ENCODE measurements at regions of chr19 and their contacts with region 1.

Region 1: GRCh38 chr19:19865739-19866481 is at the start of gene ZNF253:
- DNase-seq: peak; percentile 98
- ATAC-seq: peak; percentile 98
- H3K4me3 ChIP-seq: peak within 1 kb of the TSS; percentile 76 to 80
- H3K27ac ChIP-seq: peak within 1 kb of the TSS; percentile 43 to 50
- H3K4me1 ChIP-seq: no peaks in the 10 kb centered on the region
- H3K27me3 ChIP-seq: no peaks in the 10 kb centered on the region
- total RNA-seq, gene ZNF253: 5.4 to 12.6 TPM

Region 2: GRCh38 chr19:19776041-19777008 is 89.6 kb before region 1 on chr19:
- intact Hi-C with region 1: loop called in 1 of 2 experiments (anchors 10 kb)
- DNase-seq: peak; percentile 99
- ATAC-seq: peak; percentile 100
- H3K4me3 ChIP-seq: peak overlapping the region; percentile 22 to 65
- H3K27ac ChIP-seq: no peak overlapping the region
- H3K4me1 ChIP-seq: peaks cover 0 to 4% of the 10 kb centered on the region in 2 donors
- H3K27me3 ChIP-seq: no peaks in the 10 kb centered on the region

Region 3: GRCh38 chr19:19900729-19901444 is 35.0 kb after region 1 on chr19 and contains the start of gene ZNF93:
- intact Hi-C with region 1: loop called in 1 of 2 experiments (anchors 5 kb)
- DNase-seq: peak; percentile 94
- ATAC-seq: peak; percentile 99
- H3K4me3 ChIP-seq: peak within 1 kb of the TSS; percentile 75 to 82
- H3K27ac ChIP-seq: peak within 1 kb of the TSS in 1 of 2 donors; percentile 72
- H3K4me1 ChIP-seq: no peaks in the 10 kb centered on the region
- H3K27me3 ChIP-seq: no peaks in the 10 kb centered on the region
- total RNA-seq, gene ZNF93: 3.9 to 4.1 TPM

Region 4: DNA sequence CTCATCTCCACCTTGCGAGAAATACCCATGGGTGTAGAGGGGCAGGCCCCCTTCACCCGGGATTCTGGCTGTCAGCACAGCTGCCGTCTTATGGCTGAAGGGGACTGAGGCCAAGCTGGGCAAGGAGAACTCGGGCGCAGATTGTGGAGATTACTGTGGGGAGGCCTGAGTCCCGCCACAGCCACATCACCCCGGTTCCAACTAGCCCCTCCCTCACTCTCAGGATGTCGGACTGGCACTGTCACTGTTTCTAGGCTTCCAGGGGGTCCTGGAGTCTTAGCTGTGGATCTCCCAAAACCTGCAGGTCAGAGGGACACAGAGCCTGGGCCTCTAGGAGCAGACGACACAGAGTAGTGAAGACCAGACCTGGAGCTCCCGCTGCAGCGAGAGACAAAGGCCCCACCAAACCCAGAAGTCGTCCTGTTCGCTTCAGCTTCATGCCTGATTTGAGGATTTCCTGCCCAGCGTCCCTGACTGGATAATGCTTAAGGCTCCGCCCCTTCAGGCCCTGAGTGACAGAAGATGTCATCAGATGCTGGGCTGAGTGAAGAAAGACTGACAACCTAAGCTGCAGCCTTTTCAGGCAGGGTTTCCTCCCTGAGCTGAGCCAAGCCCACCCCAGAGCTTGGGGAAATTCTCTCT is 90.6 kb after region 1 on chr19:
- intact Hi-C with region 1: no loop called
- DNase-seq: no peak
- ATAC-seq: no peak
- H3K4me3 ChIP-seq: no peak overlapping the region
- H3K27ac ChIP-seq: no peak overlapping the region
- H3K4me1 ChIP-seq: no peaks in the 10 kb centered on the region
- H3K27me3 ChIP-seq: no peaks in the 10 kb centered on the region